Activated T-helper 2 cell treated with anti-CD3 and anti-CD28 coated beads, Interferon-gamma antibody, Interleukin-2, Interleukin-4, amounts not matched to agents 10 μg/mL and 5 μg/mL and 100 μg/mL, durations not matched to agents 14 hours and 24 hours and 36 hours (primary cell): ENCODE measurements at regions of chr12 and their contacts with region 1.

Region 1: GRCh38 chr12:59149997-59150642 is 229.8 kb upstream of the LRIG3 start:
- DNase-seq: no peak
- H3K4me3 Mint-ChIP-seq: no peak overlapping the region
- H3K27ac Mint-ChIP-seq: no peak overlapping the region
- H3K4me1 Mint-ChIP-seq: no peaks in the 10 kb centered on the region
- H3K27me3 Mint-ChIP-seq: no peaks in the 10 kb centered on the region

Region 2: GRCh38 chr12:58540480-58541299 is 609.4 kb before region 1 on chr12:
- intact Hi-C with region 1: loop called (anchors 2 kb)
- DNase-seq: peak; percentile 12
- H3K4me3 Mint-ChIP-seq: no peak overlapping the region
- H3K27ac Mint-ChIP-seq: no peak overlapping the region
- H3K4me1 Mint-ChIP-seq: no peaks in the 10 kb centered on the region
- H3K27me3 Mint-ChIP-seq: no peaks in the 10 kb centered on the region

Region 3: GRCh38 chr12:59113831-59114615 is 36.1 kb before region 1 on chr12:
- intact Hi-C with region 1: loop called (anchors 1 kb)
- DNase-seq: peak; percentile 43
- H3K4me3 Mint-ChIP-seq: no peak overlapping the region
- H3K27ac Mint-ChIP-seq: no peak overlapping the region
- H3K4me1 Mint-ChIP-seq: no peaks in the 10 kb centered on the region
- H3K27me3 Mint-ChIP-seq: no peaks in the 10 kb centered on the region